ENCODE measurements at regions of chr14 and their contacts with region 1.

Region 1: DNA sequence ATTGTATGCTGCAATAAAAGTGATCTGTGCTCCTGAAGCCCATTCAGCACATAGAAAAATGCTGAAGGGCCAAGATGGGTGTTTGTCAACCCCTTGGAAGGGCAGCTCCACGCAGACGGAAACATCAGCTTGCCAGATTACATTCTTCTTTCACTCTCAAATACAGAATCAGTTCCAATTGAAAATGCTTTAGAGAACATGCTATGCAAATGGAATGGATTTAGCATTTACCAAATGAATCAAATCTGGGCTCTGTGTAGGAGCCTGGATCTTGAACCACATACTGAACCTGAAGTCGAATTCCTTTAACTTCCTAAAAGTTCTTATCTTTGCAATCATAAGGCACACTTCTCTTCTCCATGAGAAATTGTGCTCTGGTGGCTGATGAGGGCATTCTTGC is 489.9 kb upstream of the FLRT2 start:
- DNase-seq: no peak
- H3K4me3 ChIP-seq: no peak overlapping the region
- H3K4me3 Mint-ChIP-seq: no peak overlapping the region
- H3K27ac ChIP-seq: no peak overlapping the region
- H3K27ac Mint-ChIP-seq: no peak overlapping the region
- H3K4me1 ChIP-seq: no peaks in the 10 kb centered on the region
- H3K4me1 Mint-ChIP-seq: no peaks in the 10 kb centered on the region
- H3K27me3 ChIP-seq: no peaks in the 10 kb centered on the region
- H3K27me3 Mint-ChIP-seq: no peaks in the 10 kb centered on the region

Region 2: GRCh38 chr14:85165094-85165493 is 125.0 kb after region 1 on chr14:
- CTCF ChIA-PET with region 1: no interaction called
- POLR2A ChIA-PET with region 1: no interaction called
- intact Hi-C with region 1: loop called (anchors 5 kb)
- DNase-seq: no peak
- H3K4me3 ChIP-seq: no peak overlapping the region
- H3K4me3 Mint-ChIP-seq: no peak overlapping the region
- H3K27ac ChIP-seq: no peak overlapping the region
- H3K27ac Mint-ChIP-seq: no peak overlapping the region
- H3K4me1 ChIP-seq: no peaks in the 10 kb centered on the region
- H3K4me1 Mint-ChIP-seq: no peaks in the 10 kb centered on the region
- H3K27me3 ChIP-seq: no peaks in the 10 kb centered on the region
- H3K27me3 Mint-ChIP-seq: no peaks in the 10 kb centered on the region